ENCODE measurements at regions of chr12 and their contacts with region 1.

Region 1: GRCh38 chr12:113048716-113049127 is 7.8 kb upstream of the DTX1 start:
- DNase-seq: peak; percentile 40
- ATAC-seq: peak; percentile 85
- H3K4me3 ChIP-seq: no peak overlapping the region
- H3K27ac ChIP-seq: no peak overlapping the region
- H3K4me1 ChIP-seq: no peaks in the 10 kb centered on the region
- H3K27me3 ChIP-seq: peaks cover 1 to 3% of the 10 kb centered on the region in 2 experiments; a peak in 1 of 5 replicates
- CTCF ChIP-seq: peak; percentile 78
- EP300 ChIP-seq: no peak
- POLR2A ChIP-seq: no peak
- RAD21 ChIP-seq: peak; percentile 71

Region 2: GRCh38 chr12:112998987-112999767 is 49.5 kb before region 1 on chr12:
- CTCF ChIA-PET with region 1: no interaction called
- POLR2A ChIA-PET with region 1: no interaction called
- in situ Hi-C with region 1: no loop called
- intact Hi-C with region 1: no loop called
- DNase-seq: no peak
- ATAC-seq: no peak
- H3K4me3 ChIP-seq: no peak overlapping the region
- H3K27ac ChIP-seq: no peak overlapping the region
- H3K4me1 ChIP-seq: peaks cover 12% of the 10 kb centered on the region
- H3K27me3 ChIP-seq: peaks cover 1 to 8% of the 10 kb centered on the region in 2 experiments; a peak in 1 of 5 replicates
- CTCF ChIP-seq: no peak
- EP300 ChIP-seq: no peak
- POLR2A ChIP-seq: no peak
- RAD21 ChIP-seq: no peak

Region 3: DNA sequence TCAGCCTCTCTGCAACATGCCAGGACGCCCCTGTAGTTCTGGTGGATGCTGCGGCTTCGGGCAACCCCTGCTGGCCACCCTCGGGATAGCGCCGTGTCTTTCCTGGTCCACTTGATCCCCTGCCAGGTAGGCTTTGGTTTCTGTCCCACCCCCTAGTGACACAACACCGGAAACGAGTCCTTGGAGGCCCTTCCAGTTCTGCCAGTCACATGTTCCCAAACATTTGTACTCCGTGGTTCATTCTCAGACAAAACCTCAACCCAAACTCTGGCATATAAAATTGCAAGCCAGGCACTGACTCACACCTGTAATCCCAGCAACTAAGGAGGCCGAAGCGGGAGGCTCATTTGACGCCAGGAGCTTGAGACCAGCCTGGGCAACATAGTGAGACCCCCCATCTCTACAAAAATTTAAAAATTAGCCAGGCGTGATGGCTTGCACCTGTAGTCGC is 49.7 kb after region 1 on chr12:
- CTCF ChIA-PET with region 1: interaction called, 43 read pairs
- POLR2A ChIA-PET with region 1: no interaction called
- in situ Hi-C with region 1: loop called (anchors 5 kb)
- intact Hi-C with region 1: loop called (anchors 1 kb)
- DNase-seq: peak; percentile 79
- ATAC-seq: peak; percentile 83
- H3K4me3 ChIP-seq: no peak overlapping the region
- H3K27ac ChIP-seq: no peak overlapping the region
- H3K4me1 ChIP-seq: peaks cover 16% of the 10 kb centered on the region
- H3K27me3 ChIP-seq: peaks cover 1 to 6% of the 10 kb centered on the region in 2 experiments; a peak in 2 of 5 replicates
- CTCF ChIP-seq: peak; percentile 95
- EP300 ChIP-seq: no peak
- POLR2A ChIP-seq: no peak
- RAD21 ChIP-seq: peak; percentile 87

Region 4: DNA sequence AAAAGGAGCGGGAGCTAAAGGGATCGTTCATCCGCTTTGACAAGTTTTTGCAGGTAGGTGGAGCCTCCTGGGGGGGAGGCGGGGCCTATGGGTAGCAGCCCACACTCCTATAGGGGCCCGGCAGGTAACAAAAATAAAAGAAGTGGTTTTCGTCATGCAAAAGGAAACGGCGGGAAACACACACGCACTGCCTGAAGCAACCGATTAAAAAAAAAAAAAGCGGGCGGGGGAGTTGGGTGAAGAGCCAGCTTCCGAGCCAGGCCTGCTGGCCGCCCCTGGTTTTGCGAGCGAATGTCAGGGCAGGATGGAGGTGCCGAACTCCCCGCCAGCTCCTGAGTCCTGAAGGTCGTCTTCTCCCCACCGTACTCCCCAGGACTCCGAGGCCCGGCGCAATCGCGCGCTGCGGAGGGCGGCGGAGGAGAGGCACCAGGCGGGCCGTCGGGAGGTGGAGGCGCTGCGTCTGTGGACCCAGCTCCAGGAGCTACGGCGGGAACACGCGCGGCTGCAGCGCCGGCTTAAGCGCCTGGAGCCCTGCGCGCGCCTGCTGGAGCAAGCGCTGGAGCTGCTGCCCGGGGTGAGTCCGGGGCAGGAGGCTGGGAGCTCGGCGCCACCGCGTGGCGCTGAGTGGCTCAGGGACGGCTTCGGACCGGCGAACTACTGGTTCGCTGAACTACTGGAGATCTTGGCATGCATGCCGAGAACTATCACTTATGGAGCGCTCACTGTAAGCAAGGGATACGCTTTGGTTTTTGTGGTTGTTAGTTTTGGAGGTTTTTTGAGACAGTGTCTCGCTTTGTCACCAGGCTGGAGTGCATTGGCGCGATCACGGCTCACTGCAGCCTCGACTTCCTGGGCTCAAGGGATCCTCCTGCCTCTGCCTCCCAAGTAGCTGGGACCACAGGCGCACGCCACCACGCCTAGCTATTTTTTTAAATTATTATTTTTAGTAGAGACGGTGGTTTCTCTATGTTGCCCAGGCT is 104.4 kb after region 1 on chr12:
- CTCF ChIA-PET with region 1: interaction called, 16 read pairs
- POLR2A ChIA-PET with region 1: no interaction called
- in situ Hi-C with region 1: loop called (anchors 5 kb)
- intact Hi-C with region 1: loop called (anchors 2 kb)
- DNase-seq: peak; percentile 55
- ATAC-seq: peak; percentile 91
- H3K4me3 ChIP-seq: peak overlapping the region; percentile 35 to 75 (median 37); a peak in 4 of 6 replicates
- H3K27ac ChIP-seq: no peak overlapping the region
- H3K4me1 ChIP-seq: peaks cover 18% of the 10 kb centered on the region
- H3K27me3 ChIP-seq: peaks cover 0 to 45% of the 10 kb centered on the region in 2 experiments; a peak in 4 of 5 replicates
- CTCF ChIP-seq: peak; percentile 83
- EP300 ChIP-seq: no peak
- POLR2A ChIP-seq: no peak
- RAD21 ChIP-seq: peak; percentile 86

Region 5: DNA sequence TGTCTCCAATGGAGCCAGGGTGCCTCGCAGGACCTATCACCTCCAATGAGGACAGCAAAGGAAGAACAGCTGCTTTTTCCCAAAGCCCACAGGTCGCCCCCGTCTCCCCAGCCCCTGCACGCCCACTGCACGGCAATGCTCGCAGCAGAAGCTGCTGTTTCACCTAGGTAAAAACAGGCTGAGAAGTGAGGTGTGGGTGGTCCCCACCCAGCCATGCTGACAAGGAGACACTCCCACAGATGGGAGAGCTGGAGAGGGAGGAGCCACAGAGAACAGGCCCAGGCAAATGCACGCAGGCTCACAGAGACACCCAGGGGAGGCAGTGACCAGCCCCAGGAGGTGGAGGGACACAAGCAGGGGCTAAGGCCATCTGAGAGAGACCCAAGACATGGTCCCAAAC is 111.2 kb after region 1 on chr12:
- CTCF ChIA-PET with region 1: no interaction called
- POLR2A ChIA-PET with region 1: no interaction called
- in situ Hi-C with region 1: loop called (anchors 5 kb)
- intact Hi-C with region 1: no loop called
- DNase-seq: no peak
- ATAC-seq: no peak
- H3K4me3 ChIP-seq: no peak overlapping the region
- H3K27ac ChIP-seq: no peak overlapping the region
- H3K4me1 ChIP-seq: no peaks in the 10 kb centered on the region
- H3K27me3 ChIP-seq: peaks cover 0 to 5% of the 10 kb centered on the region in 2 experiments; a peak in 1 of 5 replicates
- CTCF ChIP-seq: no peak
- EP300 ChIP-seq: no peak
- POLR2A ChIP-seq: no peak
- RAD21 ChIP-seq: no peak

Region 6: GRCh38 chr12:113174461-113175384 is 126.0 kb after region 1 on chr12:
- CTCF ChIA-PET with region 1: interaction called, 20 read pairs
- POLR2A ChIA-PET with region 1: no interaction called
- in situ Hi-C with region 1: no loop called
- intact Hi-C with region 1: loop called (anchors 2 kb)
- DNase-seq: peak; percentile 33
- ATAC-seq: peak; percentile 87
- H3K4me3 ChIP-seq: no peak overlapping the region
- H3K27ac ChIP-seq: no peak overlapping the region
- H3K4me1 ChIP-seq: no peaks in the 10 kb centered on the region
- H3K27me3 ChIP-seq: no peaks in the 10 kb centered on the region
- CTCF ChIP-seq: peak; percentile 88
- EP300 ChIP-seq: no peak
- POLR2A ChIP-seq: no peak
- RAD21 ChIP-seq: 0 out of 2 replicates have a peak, but pooled peaks have one; percentile 37

Region 7: GRCh38 chr12:114895827-114896226 is 1847.1 kb after region 1 on chr12:
- CTCF ChIA-PET with region 1: no interaction called
- POLR2A ChIA-PET with region 1: no interaction called
- in situ Hi-C with region 1: no loop called
- intact Hi-C with region 1: no loop called
- DNase-seq: no peak
- ATAC-seq: no peak
- H3K4me3 ChIP-seq: no peak overlapping the region
- H3K27ac ChIP-seq: no peak overlapping the region
- H3K4me1 ChIP-seq: no peaks in the 10 kb centered on the region
- H3K27me3 ChIP-seq: no peaks in the 10 kb centered on the region; a peak in 1 of 5 replicates
- CTCF ChIP-seq: no peak
- EP300 ChIP-seq: no peak
- POLR2A ChIP-seq: no peak
- RAD21 ChIP-seq: no peak